Heart left ventricle (tissue), 16 donors: ENCODE measurements at regions of chr9 and their contacts with region 1.

Region 1: GRCh38 chr9:83538172-83538889 is at the start of gene FRMD3:
- DNase-seq: peak; percentile 89 to 94 (median 92)
- ATAC-seq: peak; percentile 96 to 98 (median 97)
- H3K4me3 ChIP-seq: peak within 1 kb of the TSS; percentile 52 to 88 (median 76)
- H3K27ac ChIP-seq: peak within 1 kb of the TSS; percentile 33 to 91 (median 82)
- H3K4me1 ChIP-seq: peaks cover 0 to 22% (median 10%) of the 10 kb centered on the region in 12 donors
- H3K27me3 ChIP-seq: peaks cover 0 to 11% (median 0%) of the 10 kb centered on the region in 9 donors
- CTCF ChIP-seq: peak; percentile 65 to 94 (median 84)
- POLR2A ChIP-seq: peak in 1 of 2 donors; percentile 42
- total RNA-seq, gene FRMD3: 48.4 to 195 (median 82.4) TPM

Region 2: DNA sequence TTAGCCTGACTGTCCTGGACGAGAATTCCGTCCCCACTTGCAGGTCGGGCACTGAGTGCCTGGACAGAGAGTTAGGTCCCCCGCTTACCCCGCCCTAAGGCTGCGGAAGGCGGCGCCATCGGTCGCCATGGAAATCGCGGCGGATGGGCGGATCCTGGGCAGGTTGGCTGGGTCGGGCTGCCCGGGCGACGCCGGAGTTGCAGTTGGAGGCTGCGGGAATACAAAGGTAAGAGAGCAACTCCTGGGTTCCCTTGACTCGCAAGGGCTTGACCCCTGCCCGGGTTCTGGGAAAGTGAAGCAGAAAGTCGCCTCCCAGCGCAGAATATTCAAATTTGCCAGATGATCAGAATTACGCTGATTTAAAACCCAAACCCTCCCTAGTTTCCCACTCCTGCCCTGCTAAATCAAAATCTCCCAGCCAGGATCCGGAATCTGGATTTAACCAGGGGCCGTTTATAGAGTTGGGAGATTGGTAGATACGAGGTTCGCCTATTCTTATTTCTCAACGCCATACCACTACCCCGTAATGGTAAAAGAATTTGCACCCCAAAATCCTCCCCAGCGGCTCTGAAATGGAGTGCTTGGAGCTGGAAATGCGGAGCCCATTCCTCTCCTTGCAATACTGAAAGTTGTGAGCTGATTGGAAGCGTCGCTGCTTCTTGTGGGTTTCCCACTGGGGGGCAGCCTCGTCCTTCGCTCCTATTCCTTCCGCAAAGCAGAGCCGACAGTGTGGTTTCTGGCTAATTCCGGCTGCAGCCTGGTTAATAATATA is 319.0 kb before region 1 on chr9:
- intact Hi-C with region 1: loop called in 7 of 10 experiments (anchors 1 to 5 kb)
- DNase-seq: peak; percentile 79 to 90 (median 84)
- ATAC-seq: peak; percentile 93 to 97 (median 97)
- H3K4me3 ChIP-seq: peak overlapping the region; percentile 44 to 73 (median 62)
- H3K27ac ChIP-seq: peak overlapping the region; percentile 19 to 82 (median 73)
- H3K4me1 ChIP-seq: peaks cover 0 to 27% (median 18%) of the 10 kb centered on the region in 12 donors
- H3K27me3 ChIP-seq: no peaks in the 10 kb centered on the region
- CTCF ChIP-seq: peak; percentile 47 to 84 (median 68)
- POLR2A ChIP-seq: peak in 1 of 2 donors; percentile 24

Region 3: DNA sequence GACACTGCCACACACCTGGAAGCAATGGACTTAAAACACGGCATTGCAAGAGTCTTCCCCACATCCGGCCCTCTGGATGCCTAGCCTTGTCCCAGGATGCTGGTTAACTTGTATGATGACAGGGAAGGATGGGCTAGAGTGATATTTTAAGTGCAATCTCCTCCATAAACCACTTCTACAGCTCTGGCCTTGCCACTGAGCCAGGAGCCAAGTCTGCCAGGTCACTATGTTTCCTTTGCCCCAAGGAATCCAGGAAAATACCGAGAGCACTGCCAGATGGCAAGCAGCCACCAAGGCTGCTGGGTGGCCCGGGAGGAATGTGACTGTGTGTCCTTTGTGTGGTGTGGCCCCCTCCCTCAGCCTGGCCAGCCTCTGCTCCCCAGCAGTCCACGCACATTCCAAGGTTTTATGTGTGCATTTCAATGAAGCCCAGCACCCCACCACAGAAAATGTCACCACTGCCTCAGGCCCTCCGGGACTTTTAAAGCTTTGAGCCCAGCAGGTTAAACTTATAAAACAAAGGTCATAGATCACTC is 106.2 kb before region 1 on chr9:
- intact Hi-C with region 1: loop called in 3 of 10 experiments (anchors 2 to 10 kb)
- DNase-seq: peak; percentile 61 to 87 (median 86)
- ATAC-seq: peak; percentile 91 to 94 (median 92)
- H3K4me3 ChIP-seq: no peak overlapping the region
- H3K27ac ChIP-seq: peak overlapping the region in 9 of 12 donors; percentile 16 to 69 (median 49)
- H3K4me1 ChIP-seq: peaks cover 0 to 54% (median 24%) of the 10 kb centered on the region in 12 donors
- H3K27me3 ChIP-seq: no peaks in the 10 kb centered on the region
- CTCF ChIP-seq: no peak
- POLR2A ChIP-seq: no peak

Region 4: GRCh38 chr9:83473488-83473971 is 64.8 kb before region 1 on chr9:
- intact Hi-C with region 1: loop called in 6 of 10 experiments (anchors 2 to 10 kb)
- DNase-seq: no peak
- ATAC-seq: peak in 1 of 4 donors; percentile 32
- H3K4me3 ChIP-seq: peak overlapping the region in 8 of 12 donors; percentile 8 to 44 (median 24)
- H3K27ac ChIP-seq: peak overlapping the region; percentile 7 to 88 (median 76)
- H3K4me1 ChIP-seq: peaks cover 3 to 58% (median 27%) of the 10 kb centered on the region in 12 donors
- H3K27me3 ChIP-seq: no peaks in the 10 kb centered on the region
- CTCF ChIP-seq: no peak
- POLR2A ChIP-seq: no peak

Region 5: DNA sequence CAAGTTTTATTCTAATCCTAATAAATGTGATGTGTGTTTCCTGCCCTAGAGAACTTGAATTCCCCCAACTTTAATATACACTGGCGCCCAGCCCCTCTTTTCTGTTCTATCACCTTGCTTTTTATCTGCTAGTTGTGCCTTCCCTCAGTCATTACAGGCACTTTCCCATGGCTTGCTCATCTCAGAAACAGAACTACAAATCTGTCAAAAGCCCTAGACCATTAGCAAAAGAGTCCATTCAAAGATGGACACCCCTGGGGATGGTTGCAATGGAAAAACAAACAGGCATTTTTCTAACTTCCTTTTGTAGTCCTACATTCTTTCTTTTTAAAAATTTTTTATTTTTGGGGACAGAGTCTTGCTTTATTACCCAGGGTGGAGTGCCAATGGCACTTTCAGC is 48.4 kb before region 1 on chr9:
- intact Hi-C with region 1: loop called in 1 of 10 experiments (anchors 5 kb)
- DNase-seq: no peak
- ATAC-seq: no peak
- H3K4me3 ChIP-seq: no peak overlapping the region
- H3K27ac ChIP-seq: peak overlapping the region in 3 of 12 donors; percentile 27 to 46 (median 27)
- H3K4me1 ChIP-seq: peaks cover 0 to 15% (median 4%) of the 10 kb centered on the region in 12 donors
- H3K27me3 ChIP-seq: no peaks in the 10 kb centered on the region
- CTCF ChIP-seq: no peak
- POLR2A ChIP-seq: no peak

Region 6: DNA sequence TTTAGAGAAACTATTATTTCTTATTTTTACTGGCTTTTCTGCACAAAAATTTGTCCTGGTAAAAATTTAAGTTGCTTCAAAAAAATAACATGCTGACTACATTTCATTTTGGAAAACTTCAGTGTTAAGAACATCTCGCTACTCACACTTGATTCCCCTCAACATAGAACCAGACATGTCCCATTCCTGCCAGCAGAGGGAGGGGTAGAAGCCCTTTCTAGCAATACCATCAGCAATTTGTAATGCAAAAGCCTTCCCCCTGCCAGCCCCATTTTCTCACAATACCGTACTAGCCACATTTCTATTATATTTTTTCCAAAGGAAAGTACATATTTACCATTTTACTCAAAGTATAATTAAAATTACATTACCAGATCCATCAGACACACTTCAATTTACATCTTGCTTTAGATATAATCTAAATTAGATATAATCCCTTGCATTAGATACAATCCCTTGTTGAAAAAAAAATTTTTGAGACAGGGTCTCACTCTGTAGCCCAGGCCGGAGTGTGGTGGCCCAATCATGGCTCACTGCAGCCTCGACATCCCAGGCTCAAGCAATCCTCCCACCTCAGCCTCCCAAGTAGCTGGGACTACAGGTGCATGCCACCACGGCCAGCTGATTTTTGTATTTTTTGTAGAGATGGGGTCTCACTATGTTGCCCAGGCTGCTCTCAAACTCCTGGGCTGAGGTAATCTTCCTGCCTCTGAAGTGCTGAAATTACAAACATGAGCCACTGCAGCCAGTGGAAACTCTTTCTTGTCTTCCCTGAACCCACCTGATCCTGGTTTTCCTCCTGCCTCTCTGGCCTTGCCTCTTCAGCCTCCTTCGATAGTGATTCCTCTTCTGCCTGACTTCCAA is 45.1 kb after region 1 on chr9:
- intact Hi-C with region 1: loop called in 2 of 10 experiments (anchors 2 to 10 kb)
- DNase-seq: peak in 4 of 5 donors; percentile 45 to 53 (median 46)
- ATAC-seq: peak in 3 of 4 donors; percentile 65 to 86 (median 66)
- H3K4me3 ChIP-seq: no peak overlapping the region
- H3K27ac ChIP-seq: no peak overlapping the region
- H3K4me1 ChIP-seq: no peaks in the 10 kb centered on the region
- H3K27me3 ChIP-seq: no peaks in the 10 kb centered on the region
- CTCF ChIP-seq: peak; percentile 59 to 82 (median 69)
- POLR2A ChIP-seq: no peak

Region 7: GRCh38 chr9:83617299-83617698 is 79.0 kb after region 1 on chr9:
- intact Hi-C with region 1: no loop called
- DNase-seq: no peak
- ATAC-seq: no peak
- H3K4me3 ChIP-seq: no peak overlapping the region
- H3K27ac ChIP-seq: no peak overlapping the region
- H3K4me1 ChIP-seq: peaks cover 0 to 5% (median 0%) of the 10 kb centered on the region in 12 donors
- H3K27me3 ChIP-seq: no peaks in the 10 kb centered on the region
- CTCF ChIP-seq: no peak
- POLR2A ChIP-seq: no peak